ENCODE measurements at regions of chr9 and their contacts with region 1.

Region 1: DNA sequence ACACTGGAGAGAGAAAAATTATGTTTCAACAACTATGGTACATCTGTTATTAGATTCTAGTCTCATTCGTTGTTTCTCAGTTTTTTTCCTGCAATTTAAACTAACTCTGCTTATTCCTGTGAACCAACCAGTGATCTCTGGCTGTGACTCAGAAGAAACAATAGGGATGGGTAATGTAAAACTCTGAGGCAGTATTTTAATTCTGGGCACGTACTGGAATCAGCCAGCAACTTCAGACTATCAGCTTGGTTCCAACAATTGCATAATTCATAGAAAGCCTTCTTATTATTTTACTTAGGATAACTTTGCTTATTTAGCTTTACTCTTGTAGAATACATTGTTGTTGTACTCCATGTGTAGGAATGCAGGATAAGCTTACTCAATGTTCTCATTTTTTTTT is 28.7 kb downstream of the MLLT3 start:
- DNase-seq: no peak
- ATAC-seq: no peak
- H3K4me3 ChIP-seq: no peak overlapping the region
- H3K4me3 Mint-ChIP-seq: no peak overlapping the region
- H3K27ac ChIP-seq: no peak overlapping the region
- H3K27ac Mint-ChIP-seq: peak overlapping the region in 2 of 9 donors; percentile 38 to 51
- H3K4me1 ChIP-seq: peaks cover 4 to 8% of the 10 kb centered on the region in 2 donors
- H3K4me1 Mint-ChIP-seq: peaks cover 39 to 80% (median 72%) of the 10 kb centered on the region in 7 donors
- H3K27me3 ChIP-seq: no peaks in the 10 kb centered on the region
- H3K27me3 Mint-ChIP-seq: no peaks in the 10 kb centered on the region

Region 2: DNA sequence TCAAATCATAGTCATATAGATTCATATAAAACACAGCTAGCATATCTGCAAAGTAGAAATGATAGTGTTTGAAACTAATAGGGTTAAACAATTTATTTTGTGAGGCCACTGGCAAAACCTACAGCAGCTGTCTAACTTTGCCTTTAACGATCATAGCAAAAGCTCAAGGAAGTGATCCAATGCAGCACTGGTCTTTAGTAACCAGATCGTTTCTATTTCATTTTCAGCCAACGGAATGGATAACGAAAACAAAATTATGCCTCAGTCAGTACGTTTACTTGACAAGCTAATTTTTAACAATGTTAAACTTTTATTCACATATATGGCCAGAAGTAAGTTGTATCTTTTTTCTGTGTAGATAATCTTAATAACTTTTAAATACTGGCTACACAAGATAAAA is 11.0 kb after region 1 on chr9:
- CTCF ChIA-PET with region 1: no interaction called
- POLR2A ChIA-PET with region 1: interaction called, 3 read pairs
- intact Hi-C with region 1: loop called in 1 of 2 experiments (anchors 1 kb)
- DNase-seq: no peak
- ATAC-seq: peak; percentile 58
- H3K4me3 ChIP-seq: no peak overlapping the region
- H3K4me3 Mint-ChIP-seq: peak overlapping the region in 9 of 10 donors; percentile 7 to 79 (median 69)
- H3K27ac ChIP-seq: peak overlapping the region; percentile 29
- H3K27ac Mint-ChIP-seq: peak overlapping the region; percentile 9 to 80 (median 56)
- H3K4me1 ChIP-seq: peaks cover 0 to 33% of the 10 kb centered on the region in 2 donors
- H3K4me1 Mint-ChIP-seq: peaks cover 41 to 99% (median 93%) of the 10 kb centered on the region in 7 donors
- H3K27me3 ChIP-seq: no peaks in the 10 kb centered on the region
- H3K27me3 Mint-ChIP-seq: no peaks in the 10 kb centered on the region